ENCODE measurements at regions of chr11 and their contacts with region 1.

Region 1: GRCh38 chr11:17504330-17505107 is 27.9 kb upstream of the ABCC8 start:
- DNase-seq: peak; percentile 86
- ATAC-seq: peak; percentile 85
- H3K4me3 Mint-ChIP-seq: no peak overlapping the region
- H3K27ac Mint-ChIP-seq: no peak overlapping the region
- H3K4me1 Mint-ChIP-seq: no peaks in the 10 kb centered on the region
- H3K27me3 Mint-ChIP-seq: peaks cover 8% of the 10 kb centered on the region

Region 2: DNA sequence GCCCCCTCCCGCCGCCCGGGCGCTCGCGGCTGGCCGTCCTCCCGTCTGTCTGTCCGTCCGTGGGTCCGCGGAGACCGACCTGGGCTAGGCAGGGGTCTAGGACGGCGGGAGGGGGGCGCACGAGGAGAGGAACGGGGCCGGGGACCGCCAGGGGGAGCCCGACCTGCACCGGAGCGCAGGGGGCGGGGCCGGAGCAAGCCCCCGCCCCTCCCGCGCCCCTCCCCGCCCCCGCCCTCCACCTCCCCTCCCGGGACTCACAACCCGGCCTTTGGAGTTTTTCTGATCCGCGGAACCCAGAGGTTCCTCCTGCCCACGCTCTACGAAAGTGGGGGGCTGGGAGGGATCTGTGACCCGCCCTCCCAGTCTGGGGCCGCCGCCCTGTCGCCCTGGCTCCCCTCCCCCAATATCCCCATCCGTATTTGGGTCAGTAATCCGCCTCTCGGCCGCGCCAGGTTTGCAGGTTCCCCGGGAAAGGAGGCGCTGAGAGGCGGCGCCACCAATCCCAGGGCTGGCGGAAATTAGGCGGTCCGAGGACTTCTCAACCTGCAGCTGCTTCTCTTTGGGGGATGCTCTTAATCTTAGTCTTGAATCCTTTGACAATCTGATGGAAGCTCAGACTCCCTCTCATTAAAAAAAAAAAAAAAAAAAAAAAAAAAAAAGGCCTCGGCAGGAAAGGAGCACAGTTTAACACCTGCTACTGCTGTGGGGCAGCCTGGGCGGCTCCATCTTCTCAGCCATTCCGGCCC is 115.1 kb before region 1 on chr11:
- CTCF ChIA-PET with region 1: interaction called, 101 read pairs
- POLR2A ChIA-PET with region 1: no interaction called
- DNase-seq: peak; percentile 83
- ATAC-seq: peak; percentile 85
- H3K4me3 Mint-ChIP-seq: peak overlapping the region; percentile 63
- H3K27ac Mint-ChIP-seq: no peak overlapping the region
- H3K4me1 Mint-ChIP-seq: peaks cover 17% of the 10 kb centered on the region
- H3K27me3 Mint-ChIP-seq: peaks cover 11% of the 10 kb centered on the region

Region 3: GRCh38 chr11:17486646-17487045 is 17.9 kb before region 1 on chr11:
- CTCF ChIA-PET with region 1: no interaction called
- POLR2A ChIA-PET with region 1: no interaction called
- DNase-seq: no peak
- ATAC-seq: no peak
- H3K4me3 Mint-ChIP-seq: no peak overlapping the region
- H3K27ac Mint-ChIP-seq: no peak overlapping the region
- H3K4me1 Mint-ChIP-seq: no peaks in the 10 kb centered on the region
- H3K27me3 Mint-ChIP-seq: peaks cover 18% of the 10 kb centered on the region

Region 4: GRCh38 chr11:17528181-17528691 is 23.7 kb after region 1 on chr11:
- CTCF ChIA-PET with region 1: interaction called, 10 read pairs
- POLR2A ChIA-PET with region 1: no interaction called
- DNase-seq: peak; percentile 65
- ATAC-seq: peak; percentile 88
- H3K4me3 Mint-ChIP-seq: no peak overlapping the region
- H3K27ac Mint-ChIP-seq: no peak overlapping the region
- H3K4me1 Mint-ChIP-seq: no peaks in the 10 kb centered on the region
- H3K27me3 Mint-ChIP-seq: peaks cover 4% of the 10 kb centered on the region

Region 5: DNA sequence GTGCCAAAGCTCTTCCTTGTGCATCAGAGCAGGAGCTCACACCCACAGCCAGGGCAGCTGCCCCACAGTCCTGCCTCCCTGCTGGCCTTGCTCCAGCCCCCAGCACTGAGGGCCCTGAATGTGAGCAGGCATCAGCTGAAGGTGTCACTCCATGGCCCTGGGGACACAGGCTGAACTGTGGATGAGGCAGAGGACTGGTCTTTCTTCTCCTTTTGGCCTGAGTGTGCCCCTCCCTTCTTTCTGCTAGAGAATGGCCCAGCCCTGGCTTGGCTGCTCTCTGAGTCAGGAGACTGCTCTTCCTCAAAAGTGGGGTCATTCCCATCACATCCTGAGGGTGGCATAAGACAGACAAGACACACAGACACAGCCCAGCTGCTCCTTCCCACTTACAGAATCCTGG is 58.7 kb after region 1 on chr11:
- CTCF ChIA-PET with region 1: no interaction called
- POLR2A ChIA-PET with region 1: no interaction called
- DNase-seq: no peak
- ATAC-seq: no peak
- H3K4me3 Mint-ChIP-seq: no peak overlapping the region
- H3K27ac Mint-ChIP-seq: no peak overlapping the region
- H3K4me1 Mint-ChIP-seq: peaks cover under 1% of the 10 kb centered on the region
- H3K27me3 Mint-ChIP-seq: peaks cover 3% of the 10 kb centered on the region

Region 6: GRCh38 chr11:17635551-17635938 is 131.0 kb after region 1 on chr11:
- CTCF ChIA-PET with region 1: no interaction called
- POLR2A ChIA-PET with region 1: no interaction called
- DNase-seq: no peak
- ATAC-seq: no peak
- H3K4me3 Mint-ChIP-seq: no peak overlapping the region
- H3K27ac Mint-ChIP-seq: no peak overlapping the region
- H3K4me1 Mint-ChIP-seq: no peaks in the 10 kb centered on the region
- H3K27me3 Mint-ChIP-seq: no peaks in the 10 kb centered on the region

Measured in activated CD8-positive, alpha-beta T cell treated with anti-CD3 and anti-CD28 coated beads, Interleukin-2, amount 10 ng/mL, durations not matched to agents 7 days and 5 days (primary cell).